CD8-positive, alpha-beta T cell (primary cell): ENCODE measurements at regions of chr22 and their contacts with region 1.

Region 1: GRCh38 chr22:24555157-24556039 is at the start of gene SNRPD3:
- DNase-seq: peak; percentile 99 to 100 (median 100)
- ATAC-seq: peak; percentile 86
- H3K4me3 ChIP-seq: peak within 1 kb of the TSS; percentile 70 to 96
- H3K4me3 Mint-ChIP-seq: peak within 1 kb of the TSS; percentile 93
- H3K27ac ChIP-seq: peak within 1 kb of the TSS; percentile 73 to 99
- H3K27ac Mint-ChIP-seq: peak within 1 kb of the TSS; percentile 98
- H3K4me1 ChIP-seq: peaks cover 35% of the 10 kb centered on the region
- H3K4me1 Mint-ChIP-seq: peaks cover 68% of the 10 kb centered on the region
- H3K27me3 ChIP-seq: no peaks in the 10 kb centered on the region
- H3K27me3 Mint-ChIP-seq: no peaks in the 10 kb centered on the region
- CTCF ChIP-seq: no peak
- total RNA-seq, gene SNRPD3: 33.1 to 35.0 TPM

Region 2: DNA sequence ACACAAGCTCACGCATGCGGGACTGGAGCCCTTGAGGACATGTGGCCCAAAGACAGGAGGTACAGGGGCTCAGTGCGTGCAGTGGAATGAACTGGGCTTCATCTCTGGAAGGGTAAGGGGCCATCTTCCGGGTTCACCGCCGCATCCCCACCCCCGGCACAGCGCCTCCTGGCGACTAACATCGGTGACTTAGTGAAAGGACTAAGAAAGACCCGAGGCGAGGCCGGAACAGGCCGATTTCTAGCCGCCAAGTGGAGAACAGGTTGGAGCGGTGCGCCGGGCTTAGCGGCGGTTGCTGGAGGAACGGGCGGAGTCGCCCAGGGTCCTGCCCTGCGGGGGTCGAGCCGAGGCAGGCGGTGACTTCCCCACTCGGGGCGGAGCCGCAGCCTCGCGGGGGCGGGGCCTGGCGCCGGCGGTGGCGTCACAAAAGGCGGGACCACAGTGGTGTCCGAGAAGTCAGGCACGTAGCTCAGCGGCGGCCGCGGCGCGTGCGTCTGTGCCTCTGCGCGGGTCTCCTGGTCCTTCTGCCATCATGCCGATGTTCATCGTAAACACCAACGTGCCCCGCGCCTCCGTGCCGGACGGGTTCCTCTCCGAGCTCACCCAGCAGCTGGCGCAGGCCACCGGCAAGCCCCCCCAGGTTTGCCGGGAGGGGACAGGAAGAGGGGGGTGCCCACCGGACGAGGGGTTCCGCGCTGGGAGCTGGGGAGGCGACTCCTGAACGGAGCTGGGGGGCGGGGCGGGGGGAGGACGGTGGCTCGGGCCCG is 661.3 kb before region 1 on chr22 and contains the start of gene MIF:
- CTCF ChIA-PET with region 1: no interaction called
- POLR2A ChIA-PET with region 1: interaction called, 3 read pairs
- intact Hi-C with region 1: loop called (anchors 2 to 5 kb)
- DNase-seq: peak; percentile 88 to 98 (median 94)
- ATAC-seq: peak; percentile 82
- H3K4me3 ChIP-seq: peak within 1 kb of the TSS; percentile 66 to 79
- H3K4me3 Mint-ChIP-seq: peak within 1 kb of the TSS; percentile 93
- H3K27ac ChIP-seq: peak within 1 kb of the TSS; percentile 75 to 92
- H3K27ac Mint-ChIP-seq: peak within 1 kb of the TSS; percentile 95
- H3K4me1 ChIP-seq: peaks cover 16% of the 10 kb centered on the region
- H3K4me1 Mint-ChIP-seq: peaks cover 23% of the 10 kb centered on the region
- H3K27me3 ChIP-seq: no peaks in the 10 kb centered on the region
- H3K27me3 Mint-ChIP-seq: no peaks in the 10 kb centered on the region
- CTCF ChIP-seq: peak; percentile 76
- total RNA-seq, gene MIF: 181 to 191 TPM

Region 3: DNA sequence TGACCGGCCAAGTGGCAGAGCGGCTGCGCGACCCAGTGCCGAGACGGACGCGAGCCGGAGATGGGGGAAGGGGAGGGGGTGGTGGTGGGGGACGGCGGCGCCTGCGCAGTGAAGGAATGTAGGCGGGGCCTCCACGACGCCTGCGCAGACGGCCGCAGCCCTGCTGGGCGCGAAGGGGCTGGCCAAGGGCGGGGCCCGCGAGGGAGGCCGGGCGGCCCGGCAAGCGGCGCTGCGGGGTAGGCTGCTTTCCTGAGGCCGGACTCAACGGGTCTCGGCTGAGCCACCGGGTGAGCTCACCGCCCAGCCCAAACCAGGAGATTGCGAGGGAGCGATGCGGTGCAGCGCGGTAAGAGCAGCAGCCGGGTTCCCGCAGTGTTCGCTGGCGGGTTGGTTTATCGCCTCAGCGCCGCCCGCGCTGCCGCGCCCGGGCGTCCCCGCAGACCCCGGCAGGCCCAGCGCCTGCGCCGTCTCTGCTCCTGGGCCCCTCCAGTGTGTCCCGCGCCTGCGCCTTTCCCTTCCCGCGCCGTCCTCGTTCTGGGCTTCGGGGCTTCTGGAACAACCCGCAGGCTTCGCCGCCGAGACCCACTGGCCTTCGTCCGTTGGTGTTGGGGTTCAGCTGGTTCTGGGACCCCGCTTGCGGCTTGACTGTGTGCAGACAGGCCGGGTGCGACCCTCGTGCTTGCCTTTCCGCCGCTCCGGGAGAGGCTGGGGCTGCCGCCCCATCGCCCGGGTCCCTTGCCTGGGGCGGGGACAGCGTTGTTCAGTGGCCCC is 284.6 kb before region 1 on chr22 and contains the start of gene SPECC1L:
- CTCF ChIA-PET with region 1: no interaction called
- POLR2A ChIA-PET with region 1: no interaction called
- intact Hi-C with region 1: loop called in 1 of 2 experiments (anchors 1 kb)
- DNase-seq: peak; percentile 81 to 97 (median 90)
- ATAC-seq: peak; percentile 91
- H3K4me3 ChIP-seq: peak within 1 kb of the TSS; percentile 91 to 95
- H3K4me3 Mint-ChIP-seq: peak within 1 kb of the TSS; percentile 88
- H3K27ac ChIP-seq: peak within 1 kb of the TSS; percentile 75 to 77
- H3K27ac Mint-ChIP-seq: peak within 1 kb of the TSS; percentile 87
- H3K4me1 ChIP-seq: peaks cover 19% of the 10 kb centered on the region
- H3K4me1 Mint-ChIP-seq: peaks cover 36% of the 10 kb centered on the region
- H3K27me3 ChIP-seq: no peaks in the 10 kb centered on the region
- H3K27me3 Mint-ChIP-seq: no peaks in the 10 kb centered on the region
- CTCF ChIP-seq: no peak
- total RNA-seq, gene SPECC1L: 24.7 to 28.6 TPM

Region 4: GRCh38 chr22:24433813-24434470 is 121.5 kb before region 1 on chr22:
- CTCF ChIA-PET with region 1: no interaction called
- POLR2A ChIA-PET with region 1: interaction called, 4 read pairs
- intact Hi-C with region 1: loop called (anchors 1 kb)
- DNase-seq: no peak
- ATAC-seq: peak; percentile 53
- H3K4me3 ChIP-seq: peak overlapping the region in 1 of 2 experiments; percentile 6
- H3K4me3 Mint-ChIP-seq: peak overlapping the region; percentile 73
- H3K27ac ChIP-seq: peak overlapping the region; percentile 55 to 92
- H3K27ac Mint-ChIP-seq: peak overlapping the region; percentile 94
- H3K4me1 ChIP-seq: peaks cover 99% of the 10 kb centered on the region
- H3K4me1 Mint-ChIP-seq: peaks cover 90% of the 10 kb centered on the region
- H3K27me3 ChIP-seq: no peaks in the 10 kb centered on the region
- H3K27me3 Mint-ChIP-seq: no peaks in the 10 kb centered on the region
- CTCF ChIP-seq: no peak